ENCODE measurements at regions of chr18 and their contacts with region 1.

Region 1: GRCh38 chr18:76405681-76406356 is 89.2 kb downstream of the ZNF516 start:
- DNase-seq: no peak
- ATAC-seq: peak; percentile 27

Region 2: DNA sequence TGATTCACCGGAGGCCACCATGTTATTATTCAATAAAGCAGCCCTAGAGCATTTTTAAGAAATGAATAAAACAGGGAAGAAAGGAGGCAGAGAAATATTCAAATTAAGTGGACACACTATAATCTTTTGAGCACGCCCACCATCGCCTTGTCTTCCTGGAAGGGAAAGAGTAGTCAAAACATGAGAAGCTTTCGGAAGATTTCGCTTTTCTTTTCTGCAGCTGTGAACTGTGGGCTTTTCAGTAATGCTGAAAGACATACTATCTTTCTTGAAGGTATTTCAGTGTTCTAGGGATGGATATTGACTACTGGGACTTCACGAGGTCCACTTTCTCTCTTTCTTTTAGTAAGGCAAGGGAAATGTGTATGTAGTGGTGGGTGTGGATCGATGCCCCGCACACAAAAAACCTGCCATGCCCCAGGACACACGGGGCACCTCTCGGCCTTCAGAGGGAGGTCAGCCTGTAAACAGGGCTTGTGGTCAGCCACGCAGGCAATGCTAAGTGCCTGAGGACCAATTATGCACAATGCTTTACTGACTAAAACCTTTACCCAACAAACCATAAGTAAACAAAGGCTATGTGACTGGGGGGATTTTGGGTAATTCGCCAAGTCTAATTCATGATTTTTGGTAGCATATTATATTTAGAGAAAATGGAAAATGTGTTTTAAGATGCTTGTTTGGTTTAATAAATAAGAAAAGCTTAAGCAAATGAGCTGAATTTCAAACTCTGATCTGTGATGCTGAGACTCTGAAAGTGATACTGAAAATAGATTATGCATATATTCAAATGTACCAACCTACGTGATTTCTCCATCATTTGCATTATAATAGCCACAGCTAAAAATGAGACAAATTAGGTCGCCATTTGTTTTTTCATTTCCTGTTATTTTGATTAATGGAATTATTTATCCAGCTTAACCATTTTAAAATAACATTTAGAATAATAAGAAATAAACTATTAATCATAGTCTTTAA is 41.2 kb before region 1 on chr18:
- intact Hi-C with region 1: no loop called
- DNase-seq: no peak
- ATAC-seq: peak; percentile 45

Region 3: DNA sequence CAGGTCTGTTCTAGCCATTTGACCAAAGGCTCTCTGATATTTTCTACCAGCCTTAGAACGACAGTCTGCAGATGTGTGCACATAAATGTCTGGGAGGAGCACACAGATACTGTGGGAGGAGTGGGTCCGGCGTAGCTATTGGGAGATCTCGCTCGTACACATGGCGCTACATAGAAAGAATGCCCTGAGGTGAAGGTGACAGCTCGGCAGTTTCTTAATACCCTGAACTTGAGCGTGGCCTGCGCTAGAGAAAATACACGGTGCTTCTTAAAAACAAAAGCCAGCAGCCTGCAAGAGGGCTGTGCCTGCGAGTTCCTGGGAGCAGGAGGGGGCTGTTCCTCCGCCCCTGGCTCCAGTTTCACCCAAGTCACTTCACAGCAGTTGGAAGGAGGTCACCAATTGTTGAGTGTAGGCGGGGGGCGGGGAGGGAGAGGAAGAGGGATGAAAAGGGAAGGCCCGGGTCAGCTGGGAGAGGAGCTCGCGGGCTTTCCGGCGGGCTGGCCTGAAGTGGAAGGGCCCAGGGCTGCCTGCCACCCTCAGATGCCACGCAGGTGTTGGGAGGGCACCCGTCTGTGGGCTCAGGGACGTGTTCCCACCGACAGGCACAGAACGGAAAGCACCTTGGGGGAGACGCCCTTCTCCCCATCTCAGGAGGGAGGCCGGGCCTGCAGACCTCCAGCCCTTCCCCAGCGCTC is 213.9 kb after region 1 on chr18:
- intact Hi-C with region 1: loop called (anchors 10 kb)
- DNase-seq: peak; percentile 87
- ATAC-seq: peak; percentile 84

Region 4: DNA sequence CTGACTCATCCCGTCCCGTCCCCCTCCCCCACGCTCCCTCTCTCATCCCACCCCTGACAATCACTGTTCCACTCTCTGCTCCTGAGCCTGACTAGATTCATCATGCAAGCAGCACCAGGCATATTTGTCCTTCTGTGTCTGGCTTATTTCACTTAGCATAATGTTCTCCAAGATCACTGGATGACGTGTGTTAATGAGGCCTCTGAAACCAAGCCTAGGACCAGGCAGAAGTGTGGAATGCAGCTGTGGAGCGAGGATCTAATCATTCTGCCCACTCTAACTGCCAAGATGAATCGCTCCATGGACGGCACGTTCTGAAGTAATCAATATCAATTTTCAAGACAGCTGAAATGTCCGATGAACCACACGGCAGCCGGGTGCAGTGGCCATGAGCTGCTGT is 294.1 kb after region 1 on chr18:
- intact Hi-C with region 1: loop called (anchors 1 kb)
- DNase-seq: no peak
- ATAC-seq: no peak